ENCODE measurements at regions of chr10 and their contacts with region 1.

Region 1: GRCh38 chr10:44857363-44858016 is 53.6 kb upstream of the TMEM72 start:
- DNase-seq: peak; percentile 51 to 61
- H3K4me3 ChIP-seq: no peak overlapping the region
- H3K27ac ChIP-seq: no peak overlapping the region
- H3K4me1 ChIP-seq: peaks cover 0 to 11% of the 10 kb centered on the region in 2 donors
- H3K27me3 ChIP-seq: no peaks in the 10 kb centered on the region
- CTCF ChIP-seq: peak; percentile 90 to 99 (median 92)
- POLR2A ChIP-seq: no peak

Region 2: GRCh38 chr10:43671656-43672531 is 1185.6 kb before region 1 on chr10:
- intact Hi-C with region 1: loop called (anchors 5 kb)
- DNase-seq: peak; percentile 56 to 58
- H3K4me3 ChIP-seq: no peak overlapping the region
- H3K27ac ChIP-seq: no peak overlapping the region
- H3K4me1 ChIP-seq: peaks cover 10 to 13% of the 10 kb centered on the region in 2 donors
- H3K27me3 ChIP-seq: no peaks in the 10 kb centered on the region
- CTCF ChIP-seq: peak; percentile 53 to 88 (median 79)
- POLR2A ChIP-seq: no peak

Region 3: GRCh38 chr10:44398747-44399658 is 458.5 kb before region 1 on chr10:
- intact Hi-C with region 1: loop called (anchors 10 kb)
- DNase-seq: no peak
- H3K4me3 ChIP-seq: no peak overlapping the region
- H3K27ac ChIP-seq: no peak overlapping the region
- H3K4me1 ChIP-seq: peaks cover 0 to 10% of the 10 kb centered on the region in 2 donors
- H3K27me3 ChIP-seq: no peaks in the 10 kb centered on the region
- CTCF ChIP-seq: no peak
- POLR2A ChIP-seq: no peak

Region 4: GRCh38 chr10:44647877-44648542 is 209.5 kb before region 1 on chr10:
- intact Hi-C with region 1: no loop called
- DNase-seq: peak; percentile 9 to 18
- H3K4me3 ChIP-seq: no peak overlapping the region
- H3K27ac ChIP-seq: no peak overlapping the region
- H3K4me1 ChIP-seq: no peaks in the 10 kb centered on the region
- H3K27me3 ChIP-seq: no peaks in the 10 kb centered on the region
- CTCF ChIP-seq: no peak
- POLR2A ChIP-seq: no peak

Region 5: GRCh38 chr10:44673245-44673983 is 184.1 kb before region 1 on chr10:
- intact Hi-C with region 1: no loop called
- DNase-seq: peak; percentile 89 to 91
- H3K4me3 ChIP-seq: no peak overlapping the region
- H3K27ac ChIP-seq: peak overlapping the region in 1 of 3 donors; percentile 8
- H3K4me1 ChIP-seq: peaks cover 13 to 15% of the 10 kb centered on the region in 2 donors
- H3K27me3 ChIP-seq: no peaks in the 10 kb centered on the region
- CTCF ChIP-seq: no peak
- POLR2A ChIP-seq: no peak

Region 6: DNA sequence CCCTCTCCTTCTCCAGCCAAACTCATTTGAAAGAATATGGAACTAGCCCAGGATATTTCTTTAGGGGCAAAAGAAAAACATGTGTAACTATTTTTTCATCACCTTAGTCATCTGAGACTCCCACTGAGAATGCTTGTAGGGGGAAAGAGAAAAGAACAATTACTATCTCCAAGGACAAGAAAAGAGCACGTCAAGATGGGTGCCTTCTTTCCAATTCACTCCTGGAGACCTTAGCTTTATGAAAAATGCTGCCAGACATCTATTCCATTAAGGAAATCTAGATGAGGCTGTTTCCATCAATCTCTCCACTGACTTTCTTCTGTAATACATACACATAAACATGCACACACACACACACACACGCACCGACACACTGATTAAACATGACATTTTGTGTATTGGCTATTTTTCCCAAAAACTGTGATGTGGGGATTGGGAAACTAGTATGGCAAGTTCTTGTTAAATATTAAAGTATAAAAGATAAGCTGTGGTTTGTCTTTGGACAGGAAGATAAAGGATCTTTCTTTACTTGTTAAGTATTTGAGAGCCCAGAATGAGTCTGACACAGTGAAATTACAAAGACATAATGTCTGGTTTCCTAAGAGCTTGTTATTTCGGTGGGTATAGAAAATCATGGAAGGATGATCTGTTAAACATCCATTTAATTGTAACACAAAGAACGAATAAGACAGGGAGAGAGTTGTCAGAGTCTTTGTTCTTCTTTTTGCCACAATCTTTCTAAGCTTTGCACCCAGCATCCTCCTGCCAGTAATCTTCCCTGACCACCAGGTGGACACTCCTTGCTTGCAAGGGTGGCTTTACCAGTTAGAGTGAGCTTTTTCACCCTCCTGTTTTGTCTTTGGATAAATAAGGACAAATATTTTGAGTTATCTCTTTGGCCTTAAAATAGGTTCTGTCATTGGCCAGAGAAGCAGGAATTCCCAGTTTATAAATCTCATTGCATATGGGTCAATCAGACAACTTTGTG is 123.7 kb before region 1 on chr10:
- intact Hi-C with region 1: loop called (anchors 10 kb)
- DNase-seq: no peak
- H3K4me3 ChIP-seq: no peak overlapping the region
- H3K27ac ChIP-seq: no peak overlapping the region
- H3K4me1 ChIP-seq: no peaks in the 10 kb centered on the region
- H3K27me3 ChIP-seq: no peaks in the 10 kb centered on the region
- CTCF ChIP-seq: peak in 2 of 6 experiments; percentile 12 to 21
- POLR2A ChIP-seq: no peak

Region 7: DNA sequence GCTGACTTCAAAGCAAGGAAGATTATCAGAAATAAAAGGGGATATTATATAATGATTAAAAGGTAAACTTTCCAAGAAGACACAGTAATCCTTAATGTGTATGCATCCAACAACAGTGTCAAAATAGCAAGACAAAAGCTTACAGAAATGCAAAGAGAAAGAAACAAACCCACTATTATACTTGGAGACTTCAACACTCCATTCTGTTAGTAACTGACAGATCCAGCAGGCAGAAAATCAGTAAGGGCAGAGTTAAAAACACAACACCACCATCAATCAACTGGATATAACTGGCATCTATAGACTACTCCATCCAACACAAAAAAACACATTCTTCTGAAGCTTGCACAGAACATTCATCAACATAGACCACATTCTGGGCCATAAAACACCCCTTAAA is 354.1 kb after region 1 on chr10:
- intact Hi-C with region 1: no loop called
- DNase-seq: no peak
- H3K4me3 ChIP-seq: no peak overlapping the region
- H3K27ac ChIP-seq: no peak overlapping the region
- H3K4me1 ChIP-seq: no peaks in the 10 kb centered on the region
- H3K27me3 ChIP-seq: no peaks in the 10 kb centered on the region
- CTCF ChIP-seq: no peak
- POLR2A ChIP-seq: no peak